SK-N-SH (cell line): ENCODE measurements at regions of chr7 and their contacts with region 1.

Region 1: GRCh38 chr7:77247206-77247850 is 47.7 kb upstream of the FGL2 start:
- DNase-seq: peak; percentile 72
- H3K4me3 ChIP-seq: peak overlapping the region in 1 of 2 experiments; percentile 1; a peak in 1 of 4 replicates
- H3K27ac ChIP-seq: no peak overlapping the region
- H3K4me1 ChIP-seq: peaks cover 0 to 7% of the 10 kb centered on the region in 2 experiments; a peak in 1 of 4 replicates
- H3K27me3 ChIP-seq: no peaks in the 10 kb centered on the region
- CTCF ChIP-seq: peak; percentile 99
- EP300 ChIP-seq: no peak
- RAD21 ChIP-seq: peak; percentile 91

Region 2: DNA sequence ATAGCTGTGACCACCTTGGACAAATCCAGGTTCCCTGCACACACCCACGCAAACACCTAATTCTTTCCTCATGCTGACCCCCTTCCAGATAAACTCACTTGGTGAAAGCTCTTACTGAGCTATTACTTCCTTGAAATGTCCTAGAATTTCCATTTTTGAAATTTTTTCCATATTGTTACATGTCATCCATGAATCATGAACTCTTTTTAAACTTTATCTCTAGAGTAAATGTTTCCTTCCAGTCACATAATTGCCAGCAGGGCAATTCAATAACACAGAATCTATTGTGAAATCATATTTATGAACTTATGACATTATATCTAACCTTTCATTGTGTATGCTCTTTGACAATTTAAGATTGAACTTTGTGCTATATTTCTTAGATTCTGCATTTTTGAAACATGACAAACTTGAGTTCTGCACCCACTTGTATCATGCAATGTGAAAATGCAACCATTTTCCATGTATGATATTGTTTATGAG is 20.9 kb before region 1 on chr7:
- CTCF ChIA-PET with region 1: interaction called, 11 read pairs
- POLR2A ChIA-PET with region 1: no interaction called
- DNase-seq: no peak
- H3K4me3 ChIP-seq: no peak overlapping the region
- H3K27ac ChIP-seq: no peak overlapping the region
- H3K4me1 ChIP-seq: 0 out of 4 replicates have a peak, but pooled peaks cover 0 to 6% of the 10 kb centered on the region in 2 experiments
- H3K27me3 ChIP-seq: no peaks in the 10 kb centered on the region
- CTCF ChIP-seq: no peak
- EP300 ChIP-seq: no peak
- RAD21 ChIP-seq: no peak

Region 3: DNA sequence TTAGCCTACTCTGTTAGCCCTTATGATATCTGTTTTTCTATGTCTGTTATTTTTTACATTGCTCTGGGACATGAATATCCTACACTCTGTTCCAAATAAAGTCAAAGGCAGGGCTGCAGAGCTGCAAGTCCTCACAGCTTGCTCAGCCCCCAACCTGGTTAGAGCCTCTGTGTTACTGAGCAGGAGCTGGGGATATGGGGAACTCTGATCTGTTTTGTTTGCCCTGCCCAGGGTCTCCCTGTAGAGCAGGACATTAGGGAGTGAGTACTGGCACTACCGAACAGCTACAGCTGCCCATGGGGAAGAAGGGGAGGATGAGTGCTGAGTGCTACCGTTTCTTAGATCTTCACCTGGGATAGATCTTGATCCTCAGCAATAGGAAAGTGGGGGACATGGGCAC is 14.9 kb before region 1 on chr7:
- CTCF ChIA-PET with region 1: interaction called, 26 read pairs
- POLR2A ChIA-PET with region 1: no interaction called
- DNase-seq: no peak
- H3K4me3 ChIP-seq: no peak overlapping the region
- H3K27ac ChIP-seq: no peak overlapping the region
- H3K4me1 ChIP-seq: no peaks in the 10 kb centered on the region
- H3K27me3 ChIP-seq: no peaks in the 10 kb centered on the region
- CTCF ChIP-seq: no peak
- EP300 ChIP-seq: no peak
- RAD21 ChIP-seq: no peak

Region 4: DNA sequence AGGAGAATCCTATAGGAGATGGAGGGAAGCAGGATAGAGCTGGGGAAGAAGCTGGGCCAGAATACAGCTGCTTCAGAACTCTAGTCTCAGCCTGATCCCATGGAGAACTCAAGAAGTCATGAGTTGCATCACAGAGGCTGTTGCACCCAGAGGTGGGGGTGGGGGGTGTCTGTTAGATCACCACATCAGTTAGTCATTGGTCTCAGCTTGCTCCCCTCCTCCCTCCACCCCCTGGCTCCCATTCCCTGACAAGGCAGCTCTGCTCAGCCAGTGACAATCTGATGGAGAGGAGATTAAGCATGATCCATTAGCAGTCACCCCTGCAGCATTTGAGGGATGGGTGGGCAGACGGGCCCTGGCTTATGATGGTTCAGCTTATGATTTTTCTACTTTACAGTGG is 10.7 kb after region 1 on chr7:
- CTCF ChIA-PET with region 1: interaction called, 25 read pairs
- POLR2A ChIA-PET with region 1: no interaction called
- DNase-seq: peak; percentile 69
- H3K4me3 ChIP-seq: no peak overlapping the region
- H3K27ac ChIP-seq: no peak overlapping the region
- H3K4me1 ChIP-seq: peaks cover 0 to 4% of the 10 kb centered on the region in 2 experiments; a peak in 1 of 4 replicates
- H3K27me3 ChIP-seq: no peaks in the 10 kb centered on the region
- CTCF ChIP-seq: no peak
- EP300 ChIP-seq: 0 out of 4 replicates have a peak, but pooled peaks of 1 of the 2 experiments have one; percentile 12
- RAD21 ChIP-seq: no peak

Region 5: DNA sequence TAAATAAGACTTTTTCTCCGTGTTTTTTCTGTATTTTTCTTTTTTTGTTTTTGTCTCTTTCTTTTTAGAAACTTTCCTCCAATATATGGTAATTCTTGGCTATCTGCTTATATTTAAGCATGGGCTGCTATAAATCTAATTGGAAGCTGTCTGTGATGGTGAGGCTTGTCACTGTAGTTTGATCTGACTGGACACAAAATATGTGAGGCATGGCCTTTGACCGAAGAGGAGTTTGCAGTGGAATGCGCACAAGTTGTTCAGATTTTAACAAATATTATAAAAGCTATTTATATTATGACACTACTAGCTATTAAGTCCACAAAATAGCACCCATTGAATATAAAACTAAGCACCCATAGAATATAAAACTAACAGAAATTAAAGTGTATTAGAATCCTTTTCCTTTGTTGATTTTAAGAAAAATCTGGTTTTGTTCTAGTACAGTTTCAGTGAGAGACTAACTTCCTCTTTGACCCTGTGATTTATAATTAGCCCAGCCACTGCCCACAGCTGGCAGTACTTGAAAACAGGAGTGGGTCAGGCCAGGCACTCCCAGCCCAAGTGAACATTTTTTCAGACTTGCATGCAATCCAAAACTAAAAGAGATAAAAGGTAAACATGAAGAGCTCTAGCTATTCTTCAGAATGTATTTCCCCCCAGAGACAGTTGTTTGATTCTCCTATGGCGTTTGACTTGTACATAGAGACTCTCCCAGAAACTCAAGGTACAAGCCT is 22.2 kb after region 1 on chr7:
- CTCF ChIA-PET with region 1: interaction called, 23 read pairs
- POLR2A ChIA-PET with region 1: no interaction called
- DNase-seq: no peak
- H3K4me3 ChIP-seq: no peak overlapping the region
- H3K27ac ChIP-seq: no peak overlapping the region; a peak in 1 of 4 replicates
- H3K4me1 ChIP-seq: no peaks in the 10 kb centered on the region
- H3K27me3 ChIP-seq: no peaks in the 10 kb centered on the region
- CTCF ChIP-seq: no peak
- EP300 ChIP-seq: no peak
- RAD21 ChIP-seq: no peak

Region 6: GRCh38 chr7:77321300-77321699 is 74.0 kb after region 1 on chr7:
- CTCF ChIA-PET with region 1: interaction called, 16 read pairs
- POLR2A ChIA-PET with region 1: no interaction called
- DNase-seq: no peak
- H3K4me3 ChIP-seq: no peak overlapping the region
- H3K27ac ChIP-seq: peak overlapping the region in 1 of 2 experiments; percentile 11; a peak in 1 of 4 replicates
- H3K4me1 ChIP-seq: peaks cover 6 to 8% of the 10 kb centered on the region in 2 experiments; a peak in 1 of 4 replicates
- H3K27me3 ChIP-seq: no peaks in the 10 kb centered on the region
- CTCF ChIP-seq: no peak
- EP300 ChIP-seq: no peak
- RAD21 ChIP-seq: no peak

Region 7: GRCh38 chr7:77331938-77332695 is 84.8 kb after region 1 on chr7:
- CTCF ChIA-PET with region 1: interaction called, 51 read pairs
- POLR2A ChIA-PET with region 1: interaction called, 4 read pairs
- DNase-seq: peak; percentile 89
- H3K4me3 ChIP-seq: peak overlapping the region in 1 of 2 experiments; percentile 7; a peak in 1 of 4 replicates
- H3K27ac ChIP-seq: peak overlapping the region in 1 of 2 experiments; percentile 92; a peak in 2 of 4 replicates
- H3K4me1 ChIP-seq: peaks cover 21 to 38% of the 10 kb centered on the region in 2 experiments
- H3K27me3 ChIP-seq: no peaks in the 10 kb centered on the region
- CTCF ChIP-seq: peak; percentile 87
- EP300 ChIP-seq: peak in 1 of 2 experiments; percentile 82; a peak in 2 of 4 replicates
- RAD21 ChIP-seq: peak; percentile 99

Region 8: DNA sequence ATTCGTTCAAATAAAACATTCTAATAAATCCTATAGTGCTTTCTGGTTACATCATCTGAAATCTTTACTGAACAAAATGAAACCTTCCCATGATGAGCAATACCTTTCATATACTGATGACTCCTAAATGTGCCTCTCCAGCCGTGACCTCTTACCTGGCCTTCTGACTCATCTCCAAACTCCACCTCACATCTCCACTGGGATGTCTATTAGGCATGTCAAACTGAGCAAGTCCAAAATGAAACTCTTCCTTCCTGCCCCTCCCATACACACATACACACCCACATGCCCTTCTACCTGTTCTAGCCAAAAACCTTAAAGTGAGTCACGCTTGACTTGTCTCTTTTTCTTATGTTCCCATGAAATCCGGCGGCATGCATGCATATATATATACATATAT is 145.9 kb after region 1 on chr7:
- CTCF ChIA-PET with region 1: no interaction called
- POLR2A ChIA-PET with region 1: no interaction called
- DNase-seq: no peak
- H3K4me3 ChIP-seq: no peak overlapping the region
- H3K27ac ChIP-seq: no peak overlapping the region
- H3K4me1 ChIP-seq: no peaks in the 10 kb centered on the region; a peak in 1 of 4 replicates
- H3K27me3 ChIP-seq: no peaks in the 10 kb centered on the region
- CTCF ChIP-seq: no peak
- EP300 ChIP-seq: no peak
- RAD21 ChIP-seq: no peak

Region 9: GRCh38 chr7:77473229-77474005 is 226.1 kb after region 1 on chr7:
- CTCF ChIA-PET with region 1: no interaction called
- POLR2A ChIA-PET with region 1: no interaction called
- DNase-seq: no peak
- H3K4me3 ChIP-seq: no peak overlapping the region
- H3K27ac ChIP-seq: no peak overlapping the region
- H3K4me1 ChIP-seq: no peaks in the 10 kb centered on the region
- H3K27me3 ChIP-seq: no peaks in the 10 kb centered on the region
- CTCF ChIP-seq: no peak
- EP300 ChIP-seq: no peak
- RAD21 ChIP-seq: no peak